Endothelial cell of umbilical vein (primary cell): ENCODE measurements at regions of chr12 and their contacts with region 1.

Region 1: GRCh38 chr12:71746983-71747611 is 7.6 kb upstream of the RAB21 start:
- DNase-seq: peak; percentile 66
- H3K4me3 ChIP-seq: no peak overlapping the region
- H3K27ac ChIP-seq: no peak overlapping the region
- H3K4me1 ChIP-seq: no peaks in the 10 kb centered on the region
- H3K27me3 ChIP-seq: peaks cover 15 to 36% of the 10 kb centered on the region in 2 experiments
- CTCF ChIP-seq: peak; percentile 45 to 62
- POLR2A ChIP-seq: no peak

Region 2: DNA sequence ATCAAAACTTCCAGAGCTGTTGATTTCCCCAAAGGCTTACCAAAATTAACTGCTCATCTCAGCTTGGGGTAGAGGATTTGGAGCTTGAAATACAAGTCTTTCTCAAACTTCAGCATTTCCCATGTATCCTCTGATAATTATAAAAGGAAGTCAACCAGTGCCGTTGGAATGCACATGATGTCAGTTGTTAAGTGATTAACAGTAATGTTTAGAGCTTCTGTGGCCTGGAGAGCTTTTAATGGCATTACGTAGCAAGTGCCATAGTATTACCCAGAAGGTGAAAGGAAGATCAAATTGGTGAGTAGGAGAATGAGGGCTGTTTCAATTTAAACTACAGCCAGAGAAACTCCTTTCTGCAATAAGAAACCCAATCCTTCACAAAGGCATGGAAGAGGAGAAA is 764.1 kb before region 1 on chr12:
- CTCF ChIA-PET with region 1: no interaction called
- POLR2A ChIA-PET with region 1: no interaction called
- dilution Hi-C with region 1: no loop called
- intact Hi-C with region 1: no loop called
- DNase-seq: no peak
- H3K4me3 ChIP-seq: no peak overlapping the region
- H3K27ac ChIP-seq: no peak overlapping the region
- H3K4me1 ChIP-seq: no peaks in the 10 kb centered on the region
- H3K27me3 ChIP-seq: no peaks in the 10 kb centered on the region
- CTCF ChIP-seq: no peak
- POLR2A ChIP-seq: no peak

Region 3: GRCh38 chr12:71335151-71335962 is 411.7 kb before region 1 on chr12:
- CTCF ChIA-PET with region 1: no interaction called
- POLR2A ChIA-PET with region 1: no interaction called
- dilution Hi-C with region 1: no loop called
- intact Hi-C with region 1: no loop called
- DNase-seq: no peak
- H3K4me3 ChIP-seq: no peak overlapping the region
- H3K27ac ChIP-seq: no peak overlapping the region
- H3K4me1 ChIP-seq: no peaks in the 10 kb centered on the region
- H3K27me3 ChIP-seq: no peaks in the 10 kb centered on the region
- CTCF ChIP-seq: no peak
- POLR2A ChIP-seq: no peak

Region 4: DNA sequence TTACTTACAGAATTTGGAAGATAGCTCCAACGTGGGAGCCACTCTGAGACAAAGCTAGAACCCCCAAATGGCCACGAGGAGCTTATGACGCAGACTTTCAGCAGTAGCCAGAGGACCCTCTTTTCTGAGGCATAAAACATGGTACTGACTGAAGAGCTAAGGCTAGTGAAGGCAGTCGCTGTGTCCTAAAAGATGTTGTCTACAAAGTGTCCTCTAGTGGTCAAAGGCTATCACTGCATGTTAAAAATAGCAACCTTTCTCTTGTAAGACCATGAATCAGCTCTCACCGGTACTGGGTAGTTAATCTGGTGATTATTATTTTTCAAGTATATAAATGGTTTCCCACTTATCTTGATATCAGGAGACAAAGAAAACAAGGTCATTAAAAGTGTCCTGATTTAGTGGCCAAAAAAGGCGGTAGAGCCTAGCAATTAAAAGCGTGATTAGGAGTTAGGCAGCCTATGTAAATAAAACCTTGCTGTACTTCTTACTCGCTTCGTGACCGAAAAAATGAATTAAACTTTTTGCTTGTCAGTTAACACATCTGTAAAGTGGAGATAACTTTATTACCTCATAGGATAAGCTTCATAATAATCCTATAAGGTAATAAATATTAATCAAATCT is 354.5 kb before region 1 on chr12:
- CTCF ChIA-PET with region 1: interaction called, 26 read pairs
- POLR2A ChIA-PET with region 1: no interaction called
- dilution Hi-C with region 1: no loop called
- intact Hi-C with region 1: no loop called
- DNase-seq: peak; percentile 76
- H3K4me3 ChIP-seq: no peak overlapping the region
- H3K27ac ChIP-seq: no peak overlapping the region
- H3K4me1 ChIP-seq: no peaks in the 10 kb centered on the region
- H3K27me3 ChIP-seq: no peaks in the 10 kb centered on the region
- CTCF ChIP-seq: peak; percentile 62 to 73
- POLR2A ChIP-seq: no peak

Region 5: GRCh38 chr12:71551529-71551928 is 195.6 kb before region 1 on chr12:
- CTCF ChIA-PET with region 1: interaction called, 10 read pairs
- POLR2A ChIA-PET with region 1: no interaction called
- dilution Hi-C with region 1: no loop called
- intact Hi-C with region 1: no loop called
- DNase-seq: peak; percentile 6
- H3K4me3 ChIP-seq: no peak overlapping the region
- H3K27ac ChIP-seq: no peak overlapping the region
- H3K4me1 ChIP-seq: no peaks in the 10 kb centered on the region
- H3K27me3 ChIP-seq: no peaks in the 10 kb centered on the region
- CTCF ChIP-seq: peak in 1 of 2 donors; percentile 12
- POLR2A ChIP-seq: no peak

Region 6: GRCh38 chr12:71636704-71637115 is 110.4 kb before region 1 on chr12:
- CTCF ChIA-PET with region 1: interaction called, 77 read pairs
- POLR2A ChIA-PET with region 1: no interaction called
- dilution Hi-C with region 1: no loop called
- intact Hi-C with region 1: loop called (anchors 1 kb)
- DNase-seq: peak; percentile 66
- H3K4me3 ChIP-seq: no peak overlapping the region
- H3K27ac ChIP-seq: no peak overlapping the region
- H3K4me1 ChIP-seq: no peaks in the 10 kb centered on the region
- H3K27me3 ChIP-seq: no peaks in the 10 kb centered on the region
- CTCF ChIP-seq: peak; percentile 53 to 66
- POLR2A ChIP-seq: no peak

Region 7: GRCh38 chr12:71685914-71686665 is 61.0 kb before region 1 on chr12 and contains the start of gene TMEM19:
- CTCF ChIA-PET with region 1: interaction called, 59 read pairs
- POLR2A ChIA-PET with region 1: no interaction called
- dilution Hi-C with region 1: no loop called
- intact Hi-C with region 1: loop called (anchors 2 kb)
- DNase-seq: peak; percentile 93
- H3K4me3 ChIP-seq: peak within 1 kb of the TSS; percentile 76 to 98 (median 91)
- H3K27ac ChIP-seq: peak within 1 kb of the TSS; percentile 32
- H3K4me1 ChIP-seq: peaks cover 4% of the 10 kb centered on the region
- H3K27me3 ChIP-seq: no peaks in the 10 kb centered on the region
- CTCF ChIP-seq: peak in 1 of 2 donors; percentile 26
- POLR2A ChIP-seq: peak; percentile 86
- total RNA-seq, gene TMEM19: 23.8 and 24.4 TPM in 2 replicates

Region 8: GRCh38 chr12:71780237-71780822 is 33.2 kb after region 1 on chr12:
- CTCF ChIA-PET with region 1: interaction called, 12 read pairs
- POLR2A ChIA-PET with region 1: no interaction called
- dilution Hi-C with region 1: no loop called
- intact Hi-C with region 1: no loop called
- DNase-seq: peak; percentile 71
- H3K4me3 ChIP-seq: no peak overlapping the region
- H3K27ac ChIP-seq: no peak overlapping the region
- H3K4me1 ChIP-seq: peaks cover 10% of the 10 kb centered on the region
- H3K27me3 ChIP-seq: no peaks in the 10 kb centered on the region
- CTCF ChIP-seq: peak; percentile 47 to 61
- POLR2A ChIP-seq: no peak

Region 9: DNA sequence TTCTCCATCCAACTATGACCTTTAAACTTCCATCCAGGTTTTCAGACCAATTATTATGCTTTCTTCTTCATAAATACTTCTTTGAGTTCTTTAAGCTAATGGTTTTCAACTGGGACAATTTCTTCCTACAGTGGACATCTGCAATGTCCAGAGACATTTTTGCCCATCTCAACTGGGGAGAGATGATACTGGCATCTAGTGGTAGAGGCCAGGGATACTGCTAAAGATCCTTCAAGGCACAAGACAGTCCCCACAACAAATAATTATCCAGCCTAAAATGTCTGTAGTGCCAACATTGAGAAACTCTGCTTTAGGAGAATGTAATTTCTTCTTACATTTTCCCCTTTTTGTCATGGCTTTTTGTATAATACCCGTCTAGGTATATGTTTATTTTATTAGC is 535.6 kb after region 1 on chr12:
- CTCF ChIA-PET with region 1: no interaction called
- POLR2A ChIA-PET with region 1: no interaction called
- dilution Hi-C with region 1: no loop called
- intact Hi-C with region 1: no loop called
- DNase-seq: no peak
- H3K4me3 ChIP-seq: no peak overlapping the region
- H3K27ac ChIP-seq: no peak overlapping the region
- H3K4me1 ChIP-seq: no peaks in the 10 kb centered on the region
- H3K27me3 ChIP-seq: no peaks in the 10 kb centered on the region
- CTCF ChIP-seq: no peak
- POLR2A ChIP-seq: no peak